ENCODE measurements at regions of chr15 and their contacts with region 1.

Region 1: GRCh38 chr15:40694688-40695468 is at the start of gene RAD51:
- DNase-seq: peak; percentile 95 to 96 (median 95)
- H3K4me3 ChIP-seq: peak within 1 kb of the TSS; percentile 58 to 100 (median 95)
- H3K4me3 Mint-ChIP-seq: peak within 1 kb of the TSS; percentile 99 to 100
- H3K27ac ChIP-seq: peak within 1 kb of the TSS; percentile 84 to 86
- H3K27ac Mint-ChIP-seq: peak within 1 kb of the TSS; percentile 88 to 97 (median 96)
- H3K4me1 ChIP-seq: peaks cover 16 to 21% of the 10 kb centered on the region in 2 donors
- H3K4me1 Mint-ChIP-seq: peaks cover 30% of the 10 kb centered on the region
- H3K27me3 ChIP-seq: no peaks in the 10 kb centered on the region
- H3K27me3 Mint-ChIP-seq: no peaks in the 10 kb centered on the region
- CTCF ChIP-seq: no peak
- polyA plus RNA-seq, gene RAD51: 0.28 to 0.61 TPM in 2 of 3 donors, not detected in the other

Region 2: DNA sequence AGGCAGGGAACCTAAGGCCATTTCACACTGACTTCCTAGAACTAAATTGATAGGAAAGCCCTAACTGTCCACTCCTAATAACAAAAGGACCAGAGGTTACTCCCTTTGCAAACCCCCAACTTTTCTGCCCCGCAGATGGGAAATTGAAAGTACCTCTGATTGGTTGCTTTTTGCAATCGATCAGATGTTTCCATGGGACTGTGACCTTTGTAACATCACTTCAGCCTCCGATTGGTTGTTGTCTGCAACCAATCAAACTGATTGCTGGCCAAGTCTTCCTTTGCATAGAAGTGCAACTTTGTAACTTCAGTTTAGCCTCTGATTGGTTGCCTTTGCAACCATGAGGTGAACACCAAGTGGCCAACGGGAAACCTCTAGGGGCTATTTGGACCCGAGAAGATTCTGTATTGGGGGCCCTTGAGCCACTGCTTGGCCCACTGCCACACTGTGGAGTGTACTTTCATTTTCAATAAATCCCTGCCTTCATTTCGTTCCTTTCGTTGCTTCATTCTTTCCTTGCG is 112.1 kb before region 1 on chr15:
- intact Hi-C with region 1: loop called in 1 of 2 experiments (anchors 10 kb)
- DNase-seq: peak in 2 of 3 donors; percentile 17 to 23
- H3K4me3 ChIP-seq: peak overlapping the region; percentile 11 to 38 (median 17)
- H3K4me3 Mint-ChIP-seq: peak overlapping the region in 1 of 2 donors; percentile 14
- H3K27ac ChIP-seq: no peak overlapping the region
- H3K27ac Mint-ChIP-seq: no peak overlapping the region
- H3K4me1 ChIP-seq: no peaks in the 10 kb centered on the region
- H3K4me1 Mint-ChIP-seq: peaks cover 3% of the 10 kb centered on the region
- H3K27me3 ChIP-seq: no peaks in the 10 kb centered on the region
- H3K27me3 Mint-ChIP-seq: peaks cover 4 to 5% (median 5%) of the 10 kb centered on the region in 3 donors
- CTCF ChIP-seq: no peak

Region 3: GRCh38 chr15:40744815-40745152 is 49.9 kb after region 1 on chr15:
- intact Hi-C with region 1: no loop called
- DNase-seq: no peak
- H3K4me3 ChIP-seq: no peak overlapping the region
- H3K4me3 Mint-ChIP-seq: no peak overlapping the region
- H3K27ac ChIP-seq: no peak overlapping the region
- H3K27ac Mint-ChIP-seq: peak overlapping the region in 1 of 7 donors; percentile 18
- H3K4me1 ChIP-seq: peaks cover 16 to 18% of the 10 kb centered on the region in 2 donors
- H3K4me1 Mint-ChIP-seq: peaks cover 27% of the 10 kb centered on the region
- H3K27me3 ChIP-seq: no peaks in the 10 kb centered on the region
- H3K27me3 Mint-ChIP-seq: no peaks in the 10 kb centered on the region
- CTCF ChIP-seq: no peak

Region 4: GRCh38 chr15:40754883-40755811 is 60.3 kb after region 1 on chr15 and contains the start of gene RMDN3:
- intact Hi-C with region 1: loop called (anchors 5 to 10 kb)
- DNase-seq: peak; percentile 91 to 92 (median 92)
- H3K4me3 ChIP-seq: peak within 1 kb of the TSS; percentile 55 to 99 (median 90)
- H3K4me3 Mint-ChIP-seq: peak within 1 kb of the TSS; percentile 91 to 93
- H3K27ac ChIP-seq: peak within 1 kb of the TSS; percentile 46 to 90
- H3K27ac Mint-ChIP-seq: peak within 1 kb of the TSS; percentile 78 to 95 (median 90)
- H3K4me1 ChIP-seq: peaks cover 14 to 18% of the 10 kb centered on the region in 2 donors
- H3K4me1 Mint-ChIP-seq: peaks cover 12% of the 10 kb centered on the region
- H3K27me3 ChIP-seq: no peaks in the 10 kb centered on the region
- H3K27me3 Mint-ChIP-seq: peaks cover 0 to 1% (median 0%) of the 10 kb centered on the region in 3 donors
- CTCF ChIP-seq: no peak
- polyA plus RNA-seq, gene RMDN3: 9.8 to 13.5 (median 13.2) TPM

Region 5: GRCh38 chr15:40807028-40807887 is 112.4 kb after region 1 on chr15 and contains the starts of genes DNAJC17 and ZFYVE19:
- intact Hi-C with region 1: loop called (anchors 1 to 5 kb)
- DNase-seq: peak; percentile 92 to 97 (median 92)
- H3K4me3 ChIP-seq: peak within 1 kb of the TSS; percentile 82 to 100 (median 97)
- H3K4me3 Mint-ChIP-seq: peak within 1 kb of the TSS; percentile 97
- H3K27ac ChIP-seq: peak within 1 kb of the TSS; percentile 72 to 85
- H3K27ac Mint-ChIP-seq: peak within 1 kb of the TSS; percentile 86 to 97 (median 94)
- H3K4me1 ChIP-seq: peaks cover 14 to 21% of the 10 kb centered on the region in 2 donors
- H3K4me1 Mint-ChIP-seq: peaks cover 27% of the 10 kb centered on the region
- H3K27me3 ChIP-seq: no peaks in the 10 kb centered on the region
- H3K27me3 Mint-ChIP-seq: peaks cover 0 to 3% (median 3%) of the 10 kb centered on the region in 3 donors
- CTCF ChIP-seq: no peak
- polyA plus RNA-seq, gene DNAJC17: 15.7 to 31.6 (median 21.5) TPM
- polyA plus RNA-seq, gene ZFYVE19: 8.2 to 62.9 (median 10.3) TPM

Region 6: GRCh38 chr15:40928821-40929659 is 234.2 kb after region 1 on chr15 and contains the start of gene DLL4:
- intact Hi-C with region 1: no loop called
- DNase-seq: peak in 1 of 3 donors; percentile 23
- H3K4me3 ChIP-seq: peak within 1 kb of the TSS in 2 of 3 experiments; percentile 0 to 66
- H3K4me3 Mint-ChIP-seq: peak within 1 kb of the TSS; percentile 72 to 93
- H3K27ac ChIP-seq: no peak within 1 kb of the TSS
- H3K27ac Mint-ChIP-seq: peak within 1 kb of the TSS in 2 of 7 donors; percentile 35 to 42
- H3K4me1 ChIP-seq: peaks cover 53 to 69% of the 10 kb centered on the region in 2 donors
- H3K4me1 Mint-ChIP-seq: peaks cover 58% of the 10 kb centered on the region
- H3K27me3 ChIP-seq: peaks cover 56 to 91% of the 10 kb centered on the region in 2 donors
- H3K27me3 Mint-ChIP-seq: peaks cover 85 to 92% (median 85%) of the 10 kb centered on the region in 3 donors
- CTCF ChIP-seq: no peak
- polyA plus RNA-seq, gene DLL4: 0.07 TPM in 1 of 3 donors, not detected in the others

Measured in CD14-positive monocyte (primary cell).